ENCODE measurements at regions of chr7 and their contacts with region 1.

Region 1: DNA sequence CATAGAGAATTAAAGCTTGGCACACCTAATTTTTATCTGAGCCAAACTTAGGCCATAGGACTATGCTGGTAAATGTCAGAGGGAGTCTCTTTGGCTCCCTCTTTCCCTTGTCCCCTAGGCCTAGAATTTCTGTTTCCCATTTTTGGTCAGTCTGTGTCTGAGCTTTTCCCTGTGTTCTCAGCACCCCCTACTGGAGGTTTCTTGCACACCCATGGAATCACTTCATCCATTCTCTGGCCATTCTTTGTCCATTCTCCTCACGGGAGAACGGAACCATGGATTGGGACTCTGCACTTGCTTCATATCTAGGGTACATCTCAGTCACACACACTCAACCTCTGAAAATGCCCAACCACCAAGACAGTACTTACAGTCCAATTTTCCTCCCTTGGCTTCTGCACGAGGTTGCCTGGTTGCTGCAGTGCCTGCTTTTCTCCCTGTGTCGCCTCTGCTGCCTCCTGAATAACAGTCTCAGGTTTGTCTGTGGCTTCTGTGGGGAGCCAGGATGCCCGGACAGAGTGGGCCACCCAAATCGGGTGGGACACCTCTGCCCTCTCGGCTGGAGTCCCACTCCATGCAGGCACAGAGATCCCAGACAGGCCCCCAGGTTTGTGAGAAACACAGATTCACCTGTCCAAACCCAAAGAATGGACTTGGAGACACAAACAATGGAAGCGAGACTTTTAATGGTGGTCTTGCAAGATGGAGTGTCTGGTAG is 35.1 kb upstream of the DNAH11 start:
- DNase-seq: peak in 1 of 2 donors; percentile 16
- ATAC-seq: peak in 5 of 8 donors; percentile 51 to 69 (median 53)
- H3K4me3 ChIP-seq: no peak overlapping the region
- H3K27ac ChIP-seq: no peak overlapping the region
- H3K4me1 ChIP-seq: no peaks in the 10 kb centered on the region
- H3K27me3 ChIP-seq: no peaks in the 10 kb centered on the region
- CTCF ChIP-seq: peak; percentile 53 to 74 (median 70)

Region 2: GRCh38 chr7:20778063-20778721 is 729.6 kb before region 1 on chr7:
- intact Hi-C with region 1: loop called in 4 of 10 experiments (anchors 5 to 10 kb)
- DNase-seq: peak in 1 of 2 donors; percentile 26
- ATAC-seq: peak; percentile 57 to 93 (median 86)
- H3K4me3 ChIP-seq: peak overlapping the region in 8 of 10 donors; percentile 11 to 35 (median 25)
- H3K27ac ChIP-seq: no peak overlapping the region
- H3K4me1 ChIP-seq: peaks cover 0 to 13% (median 8%) of the 10 kb centered on the region in 9 donors
- H3K27me3 ChIP-seq: peaks cover 17 to 100% (median 100%) of the 10 kb centered on the region in 7 donors
- CTCF ChIP-seq: peak in 8 of 9 donors; percentile 21 to 66 (median 53)

Region 3: DNA sequence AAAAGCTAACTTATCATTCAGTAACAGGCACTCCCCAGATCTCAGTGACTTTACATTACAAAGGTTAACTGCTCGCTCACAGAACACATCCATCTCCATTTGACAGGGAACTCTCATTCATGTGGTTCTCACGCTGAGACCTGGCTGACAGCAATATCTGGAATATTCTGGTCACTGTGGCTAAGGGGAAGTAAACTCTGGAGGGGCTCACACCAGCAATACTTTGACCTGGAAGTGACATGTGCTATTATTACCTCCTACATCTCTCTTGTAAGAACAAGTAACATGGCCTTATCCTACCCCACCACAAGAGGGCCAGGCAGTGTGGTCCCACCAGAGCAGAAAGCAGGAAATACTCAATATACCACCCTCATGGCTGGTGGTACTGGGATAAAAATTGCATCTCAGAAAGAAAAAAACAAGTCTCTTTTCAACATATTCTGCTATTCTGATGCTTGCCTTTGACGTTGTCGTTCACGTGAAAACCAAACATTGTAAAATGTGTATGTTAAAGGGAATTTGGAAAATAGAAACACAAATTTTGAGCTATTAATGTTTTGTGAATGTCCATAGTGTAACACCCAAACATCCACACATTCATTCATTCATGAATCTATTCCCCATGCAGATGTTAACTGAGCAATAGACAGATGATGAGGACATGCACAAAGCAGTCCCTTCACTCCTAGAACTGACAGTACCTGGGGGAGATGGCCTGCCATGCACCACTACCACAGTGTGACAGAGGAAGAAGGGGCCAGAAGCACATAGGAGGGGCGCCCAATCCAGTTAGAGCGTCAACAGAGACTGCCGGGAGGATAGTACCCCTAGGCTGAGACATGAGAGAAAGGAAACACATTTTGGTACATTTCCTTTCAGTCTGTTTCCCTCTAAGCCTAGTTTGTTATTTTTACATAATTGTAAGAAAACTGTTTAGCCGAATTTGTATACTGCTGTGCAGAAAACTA is 245.9 kb before region 1 on chr7:
- intact Hi-C with region 1: loop called in 9 of 10 experiments (anchors 2 to 10 kb)
- DNase-seq: peak in 1 of 2 donors; percentile 6
- ATAC-seq: no peak
- H3K4me3 ChIP-seq: no peak overlapping the region
- H3K27ac ChIP-seq: no peak overlapping the region
- H3K4me1 ChIP-seq: no peaks in the 10 kb centered on the region
- H3K27me3 ChIP-seq: peaks cover 0 to 37% (median 5%) of the 10 kb centered on the region in 7 donors
- CTCF ChIP-seq: peak in 8 of 9 donors; percentile 8 to 49 (median 40)

Region 4: GRCh38 chr7:21427182-21427870 is 80.5 kb before region 1 on chr7:
- intact Hi-C with region 1: no loop called
- DNase-seq: peak; percentile 99
- ATAC-seq: peak; percentile 91 to 97 (median 95)
- H3K4me3 ChIP-seq: peak overlapping the region; percentile 16 to 97 (median 80)
- H3K27ac ChIP-seq: peak overlapping the region; percentile 83 to 98 (median 94)
- H3K4me1 ChIP-seq: peaks cover 0 to 45% (median 41%) of the 10 kb centered on the region in 9 donors
- H3K27me3 ChIP-seq: no peaks in the 10 kb centered on the region
- CTCF ChIP-seq: peak in 7 of 9 donors; percentile 12 to 48 (median 29)

Region 5: DNA sequence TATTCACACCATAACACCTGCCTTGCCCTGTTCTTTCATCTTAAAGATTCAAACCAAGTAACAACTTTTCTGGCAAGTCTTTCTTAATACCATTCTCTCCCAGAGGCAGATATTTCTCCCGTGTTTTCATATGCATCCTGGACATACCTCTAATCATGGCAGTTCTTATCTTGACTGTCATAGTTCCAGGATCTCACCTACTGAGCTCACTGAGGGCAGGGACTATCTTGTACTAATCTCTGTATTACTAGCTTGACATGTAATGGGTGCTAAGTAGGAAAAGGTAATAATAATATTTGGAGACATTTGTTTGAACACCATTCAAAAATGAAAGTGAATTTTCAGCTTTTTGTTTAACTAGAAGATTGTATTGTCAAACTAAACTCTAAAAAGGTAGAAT is 49.9 kb after region 1 on chr7:
- intact Hi-C with region 1: no loop called
- DNase-seq: no peak
- ATAC-seq: no peak
- H3K4me3 ChIP-seq: no peak overlapping the region
- H3K27ac ChIP-seq: no peak overlapping the region
- H3K4me1 ChIP-seq: peaks cover 0 to 10% (median 0%) of the 10 kb centered on the region in 9 donors
- H3K27me3 ChIP-seq: peaks cover 0 to 21% (median 0%) of the 10 kb centered on the region in 7 donors
- CTCF ChIP-seq: no peak

Region 6: DNA sequence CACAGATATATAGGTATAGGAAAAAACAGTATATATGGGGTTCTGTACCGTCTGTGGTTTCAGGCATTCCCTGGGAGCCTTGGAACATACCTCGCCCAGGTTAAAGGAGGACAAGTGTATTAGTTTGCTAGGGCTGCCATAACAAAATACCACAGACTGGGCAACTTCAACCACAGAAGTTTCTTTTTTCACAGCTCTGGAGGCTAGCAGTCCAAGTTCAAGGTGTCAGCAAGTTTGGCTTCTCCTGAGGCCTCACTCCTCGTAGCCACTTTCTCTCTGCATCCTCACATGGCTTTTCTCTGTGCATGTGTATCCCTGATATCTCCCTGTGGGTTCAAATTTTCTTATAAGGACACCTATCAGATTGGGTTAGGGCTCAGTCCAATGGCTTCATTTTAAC is 224.2 kb after region 1 on chr7:
- intact Hi-C with region 1: no loop called
- DNase-seq: no peak
- ATAC-seq: no peak
- H3K4me3 ChIP-seq: no peak overlapping the region
- H3K27ac ChIP-seq: no peak overlapping the region
- H3K4me1 ChIP-seq: no peaks in the 10 kb centered on the region
- H3K27me3 ChIP-seq: no peaks in the 10 kb centered on the region
- CTCF ChIP-seq: no peak

Measured in heart right ventricle (tissue), 16 donors.